ENCODE measurements at regions of chr3 and their contacts with region 1.

Region 1: GRCh38 chr3:69092030-69092516 is 7.3 kb downstream of the ARL6IP5 start:
- DNase-seq: peak; percentile 72
- ATAC-seq: peak; percentile 68
- H3K4me3 ChIP-seq: peak overlapping the region; percentile 26 to 46 (median 36)
- H3K4me3 Mint-ChIP-seq: peak overlapping the region; percentile 70
- H3K27ac ChIP-seq: peak overlapping the region; percentile 71 to 94
- H3K27ac Mint-ChIP-seq: peak overlapping the region; percentile 85
- H3K4me1 ChIP-seq: peaks cover 87 to 89% of the 10 kb centered on the region in 2 donors
- H3K4me1 Mint-ChIP-seq: peaks cover 85% of the 10 kb centered on the region
- H3K27me3 ChIP-seq: no peaks in the 10 kb centered on the region
- H3K27me3 Mint-ChIP-seq: no peaks in the 10 kb centered on the region
- CTCF ChIP-seq: no peak

Region 2: DNA sequence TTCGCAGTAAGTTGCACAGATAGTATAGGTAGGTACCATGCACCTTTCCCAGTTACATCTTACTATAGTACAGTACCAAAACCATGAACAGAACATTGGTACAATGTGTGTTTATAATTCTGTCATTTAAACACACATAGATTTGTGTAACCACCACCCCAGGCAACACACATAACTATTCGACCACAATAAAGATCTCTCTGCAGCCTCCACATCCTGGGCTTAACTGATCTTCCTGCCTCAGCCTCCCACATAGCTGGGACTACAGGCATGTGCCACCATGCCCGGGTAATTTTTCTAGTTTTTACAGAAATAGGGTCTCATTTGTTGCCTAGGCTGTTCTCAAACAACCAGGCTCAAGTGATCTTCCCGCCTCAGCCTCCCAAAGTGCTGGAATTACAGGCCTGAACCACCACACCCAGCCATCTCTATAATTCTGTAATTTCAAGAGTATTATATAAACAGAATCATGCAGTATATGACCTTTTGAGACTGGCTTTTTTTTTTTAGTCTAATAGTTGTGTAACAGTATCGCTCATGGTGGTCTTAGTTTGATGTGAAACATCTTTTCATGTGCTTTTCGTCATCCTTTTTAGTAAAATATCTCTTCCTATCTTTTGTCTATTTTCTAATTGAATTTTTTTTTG is 26.6 kb before region 1 on chr3:
- CTCF ChIA-PET with region 1: interaction called, 4 read pairs
- POLR2A ChIA-PET with region 1: interaction called, 10 read pairs
- intact Hi-C with region 1: no loop called
- DNase-seq: no peak
- ATAC-seq: no peak
- H3K4me3 ChIP-seq: no peak overlapping the region
- H3K4me3 Mint-ChIP-seq: no peak overlapping the region
- H3K27ac ChIP-seq: no peak overlapping the region
- H3K27ac Mint-ChIP-seq: no peak overlapping the region
- H3K4me1 ChIP-seq: no peaks in the 10 kb centered on the region
- H3K4me1 Mint-ChIP-seq: peaks cover 6% of the 10 kb centered on the region
- H3K27me3 ChIP-seq: no peaks in the 10 kb centered on the region
- H3K27me3 Mint-ChIP-seq: no peaks in the 10 kb centered on the region
- CTCF ChIP-seq: no peak

Region 3: DNA sequence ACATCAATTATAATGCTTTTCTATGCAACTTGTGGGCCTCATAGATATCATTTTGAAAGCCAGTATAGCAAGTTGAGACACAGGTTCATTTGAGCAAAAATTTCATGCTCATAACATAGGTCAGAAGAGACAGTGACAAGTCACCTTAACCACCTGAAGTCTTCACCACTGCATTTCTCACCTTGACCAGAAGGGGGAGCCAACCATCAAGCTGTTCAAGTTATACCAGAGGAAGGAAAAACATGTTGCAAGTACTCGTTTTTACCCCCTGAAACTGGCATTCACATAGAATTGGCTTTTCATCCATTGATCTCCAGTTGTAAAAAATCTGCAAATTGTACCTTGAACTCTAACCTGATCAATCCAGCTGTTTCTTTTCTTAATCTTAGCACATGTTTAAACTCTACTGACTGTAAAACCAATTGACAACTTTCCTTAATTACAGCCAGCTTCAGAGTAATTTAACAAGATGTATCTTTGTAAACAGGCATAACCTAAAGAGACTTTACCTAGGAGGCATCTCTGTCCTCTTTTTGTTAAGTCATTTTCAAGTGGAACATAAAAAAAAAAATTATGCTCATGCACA is 28.9 kb after region 1 on chr3:
- CTCF ChIA-PET with region 1: interaction called, 25 read pairs
- POLR2A ChIA-PET with region 1: interaction called, 3 read pairs
- intact Hi-C with region 1: no loop called
- DNase-seq: peak; percentile 83
- ATAC-seq: peak; percentile 80
- H3K4me3 ChIP-seq: no peak overlapping the region
- H3K4me3 Mint-ChIP-seq: no peak overlapping the region
- H3K27ac ChIP-seq: no peak overlapping the region
- H3K27ac Mint-ChIP-seq: no peak overlapping the region
- H3K4me1 ChIP-seq: no peaks in the 10 kb centered on the region
- H3K4me1 Mint-ChIP-seq: peaks cover 5% of the 10 kb centered on the region
- H3K27me3 ChIP-seq: no peaks in the 10 kb centered on the region
- H3K27me3 Mint-ChIP-seq: no peaks in the 10 kb centered on the region
- CTCF ChIP-seq: peak; percentile 99